Activated CD8-positive, alpha-beta T cell treated with anti-CD3 and anti-CD28 coated beads, Interleukin-2, amount 10 ng/mL, durations not matched to agents 7 days and 5 days (primary cell): ENCODE measurements at regions of chr2 and their contacts with region 1.

Region 1: DNA sequence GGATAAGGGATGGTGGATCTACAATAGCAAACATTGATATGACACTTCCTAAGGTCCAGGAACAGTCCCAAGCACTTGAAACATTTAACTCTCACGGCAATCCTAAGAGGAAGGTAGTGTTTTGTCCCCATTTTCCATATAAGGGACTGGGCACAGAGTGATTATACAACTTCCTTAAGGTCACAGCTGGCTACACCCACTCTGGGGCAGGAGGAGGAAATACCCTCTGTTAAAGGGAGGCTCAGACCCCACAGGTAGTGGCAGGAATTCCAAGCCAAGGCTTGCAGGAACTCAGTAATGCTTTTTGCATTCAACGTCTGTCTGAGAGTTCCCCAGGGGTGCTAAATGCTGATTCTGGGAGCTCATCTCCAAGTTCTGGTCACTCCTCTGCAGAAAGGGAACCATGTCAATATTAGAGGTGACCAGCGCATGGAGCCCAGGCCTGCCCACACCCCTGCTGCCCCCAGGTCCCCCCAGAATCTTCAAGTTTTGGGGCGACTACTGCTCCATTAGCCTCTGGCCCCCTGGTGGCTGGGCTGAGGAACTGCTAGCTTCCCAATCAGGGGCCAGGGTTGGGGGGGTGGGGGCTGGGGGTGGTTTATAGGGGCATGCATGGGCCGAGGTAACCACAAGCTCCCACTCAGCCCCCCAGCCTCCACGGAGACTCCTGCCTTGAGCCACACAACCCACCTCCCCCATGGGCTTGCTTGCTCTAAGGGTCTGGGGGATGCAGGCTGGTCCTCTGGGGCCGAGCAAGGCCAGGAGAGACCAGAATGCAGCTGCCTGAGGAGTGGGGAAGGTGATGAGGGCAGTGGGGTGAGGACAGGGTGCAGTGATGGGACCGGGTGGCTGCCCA is 11.1 kb downstream of the OBSL1 start:
- DNase-seq: no peak
- ATAC-seq: peak; percentile 16
- H3K4me3 Mint-ChIP-seq: no peak overlapping the region
- H3K27ac Mint-ChIP-seq: no peak overlapping the region
- H3K4me1 Mint-ChIP-seq: no peaks in the 10 kb centered on the region
- H3K27me3 Mint-ChIP-seq: no peaks in the 10 kb centered on the region

Region 2: GRCh38 chr2:219514196-219514761 is 46.0 kb before region 1 on chr2 and contains the start of gene ASIC4:
- CTCF ChIA-PET with region 1: no interaction called
- POLR2A ChIA-PET with region 1: no interaction called
- DNase-seq: no peak
- ATAC-seq: peak; percentile 27
- H3K4me3 Mint-ChIP-seq: no peak within 1 kb of the TSS
- H3K27ac Mint-ChIP-seq: no peak within 1 kb of the TSS
- H3K4me1 Mint-ChIP-seq: peaks cover 15% of the 10 kb centered on the region
- H3K27me3 Mint-ChIP-seq: peaks cover 74% of the 10 kb centered on the region
- total RNA-seq, gene ASIC4: not detected

Region 3: GRCh38 chr2:219530048-219530963 is 30.0 kb before region 1 on chr2:
- CTCF ChIA-PET with region 1: no interaction called
- POLR2A ChIA-PET with region 1: no interaction called
- DNase-seq: peak; percentile 87
- ATAC-seq: peak; percentile 95
- H3K4me3 Mint-ChIP-seq: no peak overlapping the region
- H3K27ac Mint-ChIP-seq: no peak overlapping the region
- H3K4me1 Mint-ChIP-seq: no peaks in the 10 kb centered on the region
- H3K27me3 Mint-ChIP-seq: peaks cover 51% of the 10 kb centered on the region

Region 4: DNA sequence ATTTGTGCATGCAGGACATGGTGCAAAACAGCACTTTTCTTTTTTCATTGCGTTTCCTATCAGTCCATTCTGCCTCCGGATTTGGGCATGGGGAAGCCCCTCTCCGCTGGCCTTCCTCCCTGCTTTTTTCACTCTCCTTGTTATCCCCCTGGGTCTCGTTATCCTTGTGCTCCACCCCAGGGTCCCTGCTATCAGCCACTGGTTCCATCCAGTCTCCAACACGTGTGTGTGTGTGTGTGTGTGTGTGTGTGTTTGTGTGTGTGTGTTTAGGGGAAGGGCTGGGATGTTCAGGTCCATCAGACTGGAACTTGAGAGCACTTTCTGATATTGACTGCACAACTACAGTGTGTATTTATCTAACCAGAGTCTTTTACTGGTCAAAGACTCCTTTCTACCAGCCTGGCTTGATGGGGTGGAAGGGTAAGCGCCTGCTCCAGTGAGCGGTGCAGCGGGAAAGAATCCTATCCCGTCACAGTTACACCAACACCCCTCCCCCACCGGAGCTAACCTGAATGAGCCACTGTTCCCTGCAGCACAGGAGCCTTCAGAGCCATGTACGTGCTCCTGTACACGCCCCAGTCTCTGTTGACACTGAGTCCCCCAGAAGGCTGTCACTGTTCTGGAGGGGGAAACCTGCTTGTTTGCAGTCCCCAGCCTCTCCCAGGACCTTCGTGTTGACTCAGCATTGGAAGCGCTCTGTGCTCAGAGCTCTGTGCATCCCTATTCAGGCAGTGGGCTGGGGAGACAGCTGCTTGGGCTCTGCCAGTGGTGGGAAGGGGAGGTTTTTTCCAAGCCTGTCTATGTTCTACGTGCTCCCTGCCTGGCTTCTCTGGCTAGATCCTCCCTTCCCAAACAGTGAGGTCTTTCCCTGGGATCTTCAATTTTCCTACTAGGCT is 16.5 kb after region 1 on chr2:
- CTCF ChIA-PET with region 1: interaction called, 13 read pairs
- POLR2A ChIA-PET with region 1: no interaction called
- DNase-seq: no peak
- ATAC-seq: no peak
- H3K4me3 Mint-ChIP-seq: no peak overlapping the region
- H3K27ac Mint-ChIP-seq: no peak overlapping the region
- H3K4me1 Mint-ChIP-seq: no peaks in the 10 kb centered on the region
- H3K27me3 Mint-ChIP-seq: peaks cover 25% of the 10 kb centered on the region

Region 5: DNA sequence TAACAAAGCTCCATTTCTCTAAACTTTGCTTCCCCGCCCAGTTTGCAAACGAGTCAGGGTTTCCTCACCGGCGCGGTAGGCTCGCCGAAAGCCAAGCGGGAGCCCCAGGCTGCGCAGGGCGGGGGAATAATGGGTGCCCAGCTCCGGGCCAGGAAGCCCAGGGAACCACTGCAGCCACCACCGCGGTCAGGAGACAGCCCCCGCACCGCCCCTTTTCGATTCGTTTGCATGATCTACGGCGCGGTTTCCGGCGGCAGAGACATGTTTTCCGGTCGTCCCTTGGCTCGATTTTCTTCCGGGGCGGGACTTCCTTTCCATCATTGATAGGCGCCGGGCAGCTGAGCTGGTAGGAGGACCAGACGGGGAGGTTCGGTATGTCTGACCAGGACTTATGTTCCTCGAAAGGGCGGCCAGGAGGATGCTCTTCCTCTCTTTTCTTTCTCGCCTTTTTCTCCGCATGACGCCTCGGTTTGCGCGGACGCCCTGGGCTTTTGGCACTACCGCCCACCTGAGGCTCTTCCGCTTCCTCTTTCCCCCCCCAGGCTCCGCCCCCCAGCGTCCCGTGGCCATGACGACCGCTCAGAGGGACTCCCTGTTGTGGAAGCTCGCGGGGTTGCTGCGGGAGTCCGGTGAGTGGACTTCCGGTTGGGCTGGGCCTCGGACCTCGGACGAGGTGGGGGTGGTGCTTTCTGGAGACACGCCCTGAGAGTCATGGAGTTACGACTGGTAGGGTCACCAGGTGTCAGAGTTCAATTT is 37.5 kb after region 1 on chr2 and contains the start of gene STK11IP:
- CTCF ChIA-PET with region 1: interaction called, 18 read pairs
- POLR2A ChIA-PET with region 1: no interaction called
- DNase-seq: peak; percentile 96
- ATAC-seq: peak; percentile 92
- H3K4me3 Mint-ChIP-seq: peak within 1 kb of the TSS; percentile 94
- H3K27ac Mint-ChIP-seq: peak within 1 kb of the TSS; percentile 89
- H3K4me1 Mint-ChIP-seq: peaks cover 32% of the 10 kb centered on the region
- H3K27me3 Mint-ChIP-seq: peaks cover 9% of the 10 kb centered on the region
- total RNA-seq, gene STK11IP: 30.0 to 33.1 TPM

Region 6: DNA sequence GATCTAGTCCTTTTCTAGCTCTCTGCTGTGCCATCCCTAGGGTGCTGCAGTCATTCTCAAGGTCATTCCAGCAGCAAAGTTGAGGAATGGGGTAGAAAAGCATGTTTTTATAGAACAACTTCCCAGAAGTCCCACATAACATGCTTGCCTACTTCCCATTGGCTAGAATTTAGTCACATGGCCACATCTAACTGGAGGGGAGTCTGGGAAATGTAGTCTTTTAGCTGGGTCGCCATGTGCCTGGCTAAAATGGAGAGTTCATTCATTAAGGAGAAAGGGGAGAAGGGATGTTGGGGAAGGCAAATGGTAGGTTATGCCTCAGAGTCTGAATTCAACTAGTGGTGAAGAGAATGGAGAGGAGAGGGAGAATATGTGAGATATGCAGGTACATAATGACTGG is 152.8 kb after region 1 on chr2:
- CTCF ChIA-PET with region 1: no interaction called
- POLR2A ChIA-PET with region 1: no interaction called
- DNase-seq: no peak
- ATAC-seq: no peak
- H3K4me3 Mint-ChIP-seq: no peak overlapping the region
- H3K27ac Mint-ChIP-seq: no peak overlapping the region
- H3K4me1 Mint-ChIP-seq: no peaks in the 10 kb centered on the region
- H3K27me3 Mint-ChIP-seq: peaks cover 18% of the 10 kb centered on the region